GM13977 (cell line): ENCODE measurements at regions of chr17 and their contacts with region 1.

Region 1: GRCh38 chr17:4412933-4413831 is 20.6 kb upstream of the SPNS3 start:
- DNase-seq: peak; percentile 86
- CTCF ChIP-seq: peak; percentile 98

Region 2: GRCh38 chr17:4199818-4200402 is 213.3 kb before region 1 on chr17:
- in situ Hi-C with region 1: loop called (anchors 10 kb)
- DNase-seq: peak; percentile 80
- CTCF ChIP-seq: peak; percentile 76